Naive thymus-derived CD4-positive, alpha-beta T cell (primary cell): ENCODE measurements at regions of chr17 and their contacts with region 1.

Region 1: GRCh38 chr17:17729620-17730249 is 48.5 kb downstream of the RAI1 start:
- DNase-seq: peak in 8 of 9 donors; percentile 39 to 74 (median 63)
- ATAC-seq: peak; percentile 87
- H3K4me3 ChIP-seq: no peak overlapping the region
- H3K4me3 Mint-ChIP-seq: peak overlapping the region in 1 of 10 donors; percentile 8
- H3K27ac ChIP-seq: no peak overlapping the region
- H3K27ac Mint-ChIP-seq: peak overlapping the region in 7 of 9 donors; percentile 35 to 92 (median 68)
- H3K4me1 ChIP-seq: peaks cover 0 to 15% of the 10 kb centered on the region in 2 donors
- H3K4me1 Mint-ChIP-seq: peaks cover 11 to 40% (median 35%) of the 10 kb centered on the region in 7 donors
- H3K27me3 ChIP-seq: no peaks in the 10 kb centered on the region
- H3K27me3 Mint-ChIP-seq: peaks cover 0 to 5% (median 0%) of the 10 kb centered on the region in 5 donors

Region 2: GRCh38 chr17:17694169-17695081 is 35.3 kb before region 1 on chr17:
- CTCF ChIA-PET with region 1: no interaction called
- POLR2A ChIA-PET with region 1: no interaction called
- intact Hi-C with region 1: loop called in 1 of 2 experiments (anchors 2 kb)
- DNase-seq: peak; percentile 65 to 83 (median 72)
- ATAC-seq: peak; percentile 87
- H3K4me3 ChIP-seq: peak overlapping the region; percentile 84
- H3K4me3 Mint-ChIP-seq: peak overlapping the region; percentile 88 to 96 (median 92)
- H3K27ac ChIP-seq: peak overlapping the region; percentile 93
- H3K27ac Mint-ChIP-seq: peak overlapping the region; percentile 95 to 99 (median 98)
- H3K4me1 ChIP-seq: peaks cover 15 to 51% of the 10 kb centered on the region in 2 donors
- H3K4me1 Mint-ChIP-seq: peaks cover 46 to 81% (median 72%) of the 10 kb centered on the region in 7 donors
- H3K27me3 ChIP-seq: no peaks in the 10 kb centered on the region
- H3K27me3 Mint-ChIP-seq: no peaks in the 10 kb centered on the region

Region 3: DNA sequence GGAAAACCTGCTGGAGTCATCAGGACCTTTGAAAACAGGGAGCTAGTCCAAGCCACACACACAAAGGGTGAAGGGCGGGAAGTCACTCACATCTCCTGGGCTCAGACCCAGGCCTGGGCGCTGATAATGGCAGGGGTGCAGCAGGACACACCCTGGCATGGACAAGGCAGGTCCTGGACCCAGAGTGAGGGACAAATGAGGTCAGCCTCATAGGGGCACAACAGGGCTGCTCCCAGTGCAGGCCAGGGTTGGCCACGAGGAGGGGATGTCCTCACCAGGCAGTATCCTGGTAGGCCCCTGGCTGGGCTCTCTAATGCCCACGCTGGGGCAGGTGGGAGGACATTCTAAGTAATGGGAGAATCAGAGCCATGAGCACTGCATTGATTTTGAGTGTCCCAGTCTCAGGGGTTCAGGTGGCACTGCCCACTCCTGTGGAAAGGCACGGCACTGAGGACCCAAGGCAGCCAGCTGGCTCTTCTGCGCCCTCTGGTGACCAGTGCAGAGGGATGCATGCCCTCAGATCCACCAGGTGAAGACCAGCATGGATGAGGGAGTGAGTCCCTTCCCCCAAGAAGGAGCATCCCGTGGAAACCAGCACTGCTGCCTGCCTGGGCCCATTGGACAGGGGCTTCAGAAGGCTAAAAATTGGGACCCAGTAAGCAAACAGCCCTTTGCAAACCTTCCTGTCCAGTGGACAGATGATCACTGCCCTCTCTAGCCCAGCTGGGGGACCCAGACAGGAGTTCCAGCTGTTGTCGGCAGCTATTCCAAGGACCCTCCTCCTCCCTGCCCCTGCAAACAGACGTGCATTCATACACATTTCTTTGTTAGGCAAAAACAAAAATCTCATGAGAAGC is 130.4 kb after region 1 on chr17:
- CTCF ChIA-PET with region 1: interaction called, 5 read pairs
- POLR2A ChIA-PET with region 1: no interaction called
- intact Hi-C with region 1: loop called (anchors 1 kb)
- DNase-seq: peak; percentile 50 to 77 (median 68)
- ATAC-seq: peak; percentile 97
- H3K4me3 ChIP-seq: no peak overlapping the region
- H3K4me3 Mint-ChIP-seq: no peak overlapping the region
- H3K27ac ChIP-seq: no peak overlapping the region
- H3K27ac Mint-ChIP-seq: peak overlapping the region in 3 of 9 donors; percentile 46 to 70 (median 58)
- H3K4me1 ChIP-seq: peaks cover 0 to 28% of the 10 kb centered on the region in 2 donors
- H3K4me1 Mint-ChIP-seq: peaks cover 13 to 67% (median 52%) of the 10 kb centered on the region in 7 donors
- H3K27me3 ChIP-seq: no peaks in the 10 kb centered on the region
- H3K27me3 Mint-ChIP-seq: no peaks in the 10 kb centered on the region